A549 (cell line): ENCODE measurements at regions of chr17 and their contacts with region 1.

Region 1: GRCh38 chr17:17568749-17569195 is 22.7 kb downstream of the PEMT start:
- DNase-seq: peak; percentile 64 to 95
- ATAC-seq: peak; percentile 58 to 86; a peak in 5 of 6 replicates
- H3K4me3 ChIP-seq: no peak overlapping the region
- H3K27ac ChIP-seq: no peak overlapping the region
- H3K4me1 ChIP-seq: no peaks in the 10 kb centered on the region
- CTCF ChIP-seq: peak; percentile 84
- EP300 ChIP-seq: no peak
- POLR2A ChIP-seq: no peak
- RAD21 ChIP-seq: peak; percentile 80 to 81

Region 2: GRCh38 chr17:17476865-17477467 is 91.8 kb before region 1 on chr17 and contains the start of gene MED9:
- CTCF ChIA-PET with region 1: interaction called, 11 read pairs
- POLR2A ChIA-PET with region 1: no interaction called
- DNase-seq: peak; percentile 95 to 97
- ATAC-seq: peak; percentile 88 to 94
- H3K4me3 ChIP-seq: peak within 1 kb of the TSS; percentile 86
- H3K27ac ChIP-seq: peak within 1 kb of the TSS; percentile 91 to 93
- H3K4me1 ChIP-seq: peaks cover 22% of the 10 kb centered on the region
- CTCF ChIP-seq: no peak
- EP300 ChIP-seq: no peak
- POLR2A ChIP-seq: peak; percentile 69
- RAD21 ChIP-seq: no peak
- polyA plus RNA-seq, gene MED9: 13.0 and 15.2 TPM in 2 replicates

Region 3: DNA sequence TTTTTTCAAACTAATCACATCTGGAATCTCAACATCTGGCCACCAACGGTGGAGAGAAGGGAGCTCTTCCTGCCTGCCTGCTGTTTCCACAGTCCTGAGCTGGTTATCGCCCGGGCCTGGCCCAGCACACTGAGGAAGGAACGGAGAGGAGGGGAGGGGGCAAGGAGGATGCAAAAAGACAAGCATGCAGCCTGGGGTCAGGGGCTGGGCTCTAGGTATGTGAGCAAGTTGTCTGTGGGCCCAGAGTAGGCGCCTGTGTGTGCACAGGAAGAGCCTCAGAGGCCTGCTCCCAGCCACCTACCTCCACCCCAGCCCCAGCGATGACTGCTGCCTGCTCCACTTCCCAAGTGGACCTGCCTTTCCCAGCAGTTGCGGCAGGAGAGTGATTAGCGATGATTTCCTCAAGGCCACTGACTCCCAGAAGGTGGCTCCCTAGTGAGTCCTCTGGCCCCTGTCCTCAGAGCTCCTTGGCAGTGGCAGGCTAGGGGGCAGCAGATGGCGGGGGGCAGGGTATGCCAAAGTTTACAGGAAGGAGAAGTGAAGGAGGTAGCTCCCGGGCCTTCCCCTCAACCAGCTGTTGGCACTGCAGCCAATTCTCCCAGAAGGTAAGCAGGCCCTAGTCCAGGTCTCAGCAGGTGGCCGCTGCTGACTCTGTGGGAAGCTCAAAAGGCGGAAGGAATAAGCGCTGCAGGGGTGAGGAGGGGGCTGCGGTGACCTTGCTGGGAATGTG is 45.6 kb before region 1 on chr17:
- CTCF ChIA-PET with region 1: interaction called, 47 read pairs
- POLR2A ChIA-PET with region 1: no interaction called
- DNase-seq: no peak
- ATAC-seq: no peak
- H3K4me3 ChIP-seq: no peak overlapping the region
- H3K27ac ChIP-seq: peak overlapping the region in 1 of 2 experiments; percentile 9; a peak in 1 of 6 replicates
- H3K4me1 ChIP-seq: peaks cover 5% of the 10 kb centered on the region; the same call in 2 of the 3 replicates
- CTCF ChIP-seq: no peak
- EP300 ChIP-seq: no peak
- POLR2A ChIP-seq: no peak
- RAD21 ChIP-seq: no peak

Region 4: GRCh38 chr17:17551361-17551760 is 17.4 kb before region 1 on chr17:
- CTCF ChIA-PET with region 1: interaction called, 46 read pairs
- POLR2A ChIA-PET with region 1: no interaction called
- DNase-seq: no peak
- ATAC-seq: no peak; a peak in 1 of 6 replicates
- H3K4me3 ChIP-seq: no peak overlapping the region
- H3K27ac ChIP-seq: no peak overlapping the region
- H3K4me1 ChIP-seq: no peaks in the 10 kb centered on the region
- CTCF ChIP-seq: no peak
- EP300 ChIP-seq: no peak
- POLR2A ChIP-seq: no peak
- RAD21 ChIP-seq: no peak

Region 5: DNA sequence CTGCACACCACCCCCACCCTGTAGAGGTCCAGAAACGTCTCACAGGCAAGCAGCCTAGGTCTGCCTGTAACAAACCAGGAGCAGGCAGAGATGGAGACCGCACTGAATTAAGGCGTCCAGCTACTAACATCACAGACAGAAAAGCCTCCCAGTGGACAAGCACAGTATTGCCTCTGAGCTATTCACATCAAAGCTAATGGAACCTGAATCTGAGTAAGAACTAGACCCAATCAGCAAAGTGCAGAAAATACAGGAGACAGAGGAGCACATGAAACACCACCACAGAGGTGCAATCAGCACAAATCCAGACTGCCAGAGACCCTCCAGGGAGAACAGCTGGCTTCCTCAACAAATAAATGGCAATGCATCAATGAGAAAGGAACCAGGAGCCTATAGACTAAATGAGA is 44.9 kb after region 1 on chr17:
- CTCF ChIA-PET with region 1: interaction called, 22 read pairs
- POLR2A ChIA-PET with region 1: no interaction called
- DNase-seq: peak; percentile 77 to 85
- ATAC-seq: peak; percentile 97 to 98
- H3K4me3 ChIP-seq: no peak overlapping the region
- H3K27ac ChIP-seq: no peak overlapping the region
- H3K4me1 ChIP-seq: no peaks in the 10 kb centered on the region
- CTCF ChIP-seq: peak; percentile 59
- EP300 ChIP-seq: no peak
- POLR2A ChIP-seq: no peak
- RAD21 ChIP-seq: peak; percentile 54 to 55; a peak in 3 of 5 replicates

Region 6: GRCh38 chr17:17712268-17712924 is 143.6 kb after region 1 on chr17:
- CTCF ChIA-PET with region 1: no interaction called
- POLR2A ChIA-PET with region 1: no interaction called
- DNase-seq: no peak
- ATAC-seq: no peak
- H3K4me3 ChIP-seq: no peak overlapping the region
- H3K27ac ChIP-seq: peak overlapping the region; percentile 94 to 95
- H3K4me1 ChIP-seq: peaks cover 77% of the 10 kb centered on the region
- CTCF ChIP-seq: no peak
- EP300 ChIP-seq: no peak
- POLR2A ChIP-seq: no peak
- RAD21 ChIP-seq: no peak